Ascending aorta (tissue), 2 donors: ENCODE measurements at regions of chr19 and their contacts with region 1.

Region 1: GRCh38 chr19:49451430-49452181 is at the start of gene PIH1D1:
- DNase-seq: peak; percentile 94 to 99
- H3K4me3 ChIP-seq: peak within 1 kb of the TSS; percentile 73 to 81
- H3K27ac ChIP-seq: peak within 1 kb of the TSS; percentile 88 to 95
- H3K4me1 ChIP-seq: peaks cover 0 to 10% of the 10 kb centered on the region in 2 donors
- H3K27me3 ChIP-seq: no peaks in the 10 kb centered on the region
- CTCF ChIP-seq: no peak
- total RNA-seq, gene PIH1D1: 177 TPM

Region 2: GRCh38 chr19:49409441-49410029 is 42.1 kb before region 1 on chr19:
- intact Hi-C with region 1: no loop called
- DNase-seq: no peak
- H3K4me3 ChIP-seq: no peak overlapping the region
- H3K27ac ChIP-seq: no peak overlapping the region
- H3K4me1 ChIP-seq: no peaks in the 10 kb centered on the region
- H3K27me3 ChIP-seq: no peaks in the 10 kb centered on the region
- CTCF ChIP-seq: no peak

Region 3: GRCh38 chr19:49473868-49474544 is 22.4 kb after region 1 on chr19 and contains the start of gene FLT3LG:
- intact Hi-C with region 1: loop called (anchors 1 kb)
- DNase-seq: peak; percentile 44 to 88
- H3K4me3 ChIP-seq: peak within 1 kb of the TSS; percentile 68 to 86
- H3K27ac ChIP-seq: peak within 1 kb of the TSS; percentile 58 to 66
- H3K4me1 ChIP-seq: peaks cover 3 to 7% of the 10 kb centered on the region in 2 donors
- H3K27me3 ChIP-seq: no peaks in the 10 kb centered on the region
- CTCF ChIP-seq: peak; percentile 95 to 99 (median 98)
- total RNA-seq, gene FLT3LG: 37.3 TPM

Region 4: GRCh38 chr19:49487277-49488045 is 35.9 kb after region 1 on chr19 and contains the start of gene RPL13A:
- intact Hi-C with region 1: loop called (anchors 1 kb)
- DNase-seq: peak; percentile 97 to 100
- H3K4me3 ChIP-seq: peak within 1 kb of the TSS; percentile 57 to 97
- H3K27ac ChIP-seq: peak within 1 kb of the TSS; percentile 73 to 83
- H3K4me1 ChIP-seq: peaks cover 10 to 20% of the 10 kb centered on the region in 2 donors
- H3K27me3 ChIP-seq: no peaks in the 10 kb centered on the region
- CTCF ChIP-seq: no peak
- total RNA-seq, gene RPL13A: 2,737 TPM